Activated naive CD4-positive, alpha-beta T cell treated with anti-CD3 and anti-CD28 coated beads for 36 hours (primary cell): ENCODE measurements at regions of chr5 and their contacts with region 1.

Region 1: GRCh38 chr5:151447174-151448037 is at the start of gene SLC36A1:
- DNase-seq: peak; percentile 97
- H3K4me3 Mint-ChIP-seq: peak within 1 kb of the TSS; percentile 96
- H3K27ac Mint-ChIP-seq: peak within 1 kb of the TSS; percentile 76
- H3K4me1 Mint-ChIP-seq: peaks cover 15% of the 10 kb centered on the region
- H3K27me3 Mint-ChIP-seq: no peaks in the 10 kb centered on the region
- total RNA-seq, gene SLC36A1: 2.6 to 3.1 TPM

Region 2: DNA sequence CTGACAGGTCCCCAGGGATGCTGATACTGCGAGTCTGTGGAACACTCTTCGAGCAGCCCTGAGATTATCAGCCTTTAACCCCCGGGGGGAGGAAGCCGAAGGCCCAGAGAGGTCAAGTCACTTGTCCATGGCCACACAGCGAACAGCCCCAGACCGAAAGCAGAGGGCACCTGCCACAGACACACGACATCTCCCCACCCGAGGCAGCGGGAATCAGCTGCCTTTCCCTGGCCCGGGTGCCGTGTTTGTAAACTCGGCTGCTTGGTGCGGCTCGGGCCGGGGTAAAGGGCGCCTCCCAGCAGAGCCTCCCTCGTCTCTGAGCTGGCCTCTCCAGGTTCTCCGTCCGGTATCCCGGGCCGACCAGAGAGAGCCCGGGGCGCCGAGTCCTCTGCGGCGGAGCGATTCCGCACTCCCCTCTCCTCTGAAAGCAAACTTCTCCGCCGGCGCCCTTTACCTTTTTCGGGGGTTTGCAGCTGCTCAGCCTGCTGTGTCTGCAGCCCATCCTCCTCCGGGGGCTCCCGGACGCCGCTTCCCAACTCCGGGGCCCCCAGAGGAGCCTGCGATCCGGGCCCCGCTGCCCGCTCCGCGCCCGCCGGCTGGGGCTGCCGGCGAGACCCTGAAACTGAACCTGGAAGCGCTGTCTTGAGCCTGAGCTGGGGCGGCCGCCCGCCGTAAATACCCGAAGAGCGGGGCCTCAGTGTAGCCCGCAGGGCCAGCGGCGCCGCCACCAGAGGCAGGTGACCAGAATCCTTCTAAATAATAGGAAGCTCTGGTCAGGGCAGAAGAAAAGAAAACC is 223.7 kb before region 1 on chr5 and contains the start of gene CCDC69:
- CTCF ChIA-PET with region 1: no interaction called
- intact Hi-C with region 1: loop called (anchors 5 kb)
- DNase-seq: peak; percentile 59
- H3K4me3 Mint-ChIP-seq: peak within 1 kb of the TSS; percentile 85
- H3K27ac Mint-ChIP-seq: peak within 1 kb of the TSS; percentile 93
- H3K4me1 Mint-ChIP-seq: peaks cover 56% of the 10 kb centered on the region
- H3K27me3 Mint-ChIP-seq: no peaks in the 10 kb centered on the region
- total RNA-seq, gene CCDC69: 15.5 to 18.5 TPM

Region 3: GRCh38 chr5:151363673-151364072 is 83.7 kb before region 1 on chr5:
- CTCF ChIA-PET with region 1: no interaction called
- intact Hi-C with region 1: no loop called
- DNase-seq: no peak
- H3K4me3 Mint-ChIP-seq: no peak overlapping the region
- H3K27ac Mint-ChIP-seq: no peak overlapping the region
- H3K4me1 Mint-ChIP-seq: no peaks in the 10 kb centered on the region
- H3K27me3 Mint-ChIP-seq: peaks cover 11% of the 10 kb centered on the region

Region 4: DNA sequence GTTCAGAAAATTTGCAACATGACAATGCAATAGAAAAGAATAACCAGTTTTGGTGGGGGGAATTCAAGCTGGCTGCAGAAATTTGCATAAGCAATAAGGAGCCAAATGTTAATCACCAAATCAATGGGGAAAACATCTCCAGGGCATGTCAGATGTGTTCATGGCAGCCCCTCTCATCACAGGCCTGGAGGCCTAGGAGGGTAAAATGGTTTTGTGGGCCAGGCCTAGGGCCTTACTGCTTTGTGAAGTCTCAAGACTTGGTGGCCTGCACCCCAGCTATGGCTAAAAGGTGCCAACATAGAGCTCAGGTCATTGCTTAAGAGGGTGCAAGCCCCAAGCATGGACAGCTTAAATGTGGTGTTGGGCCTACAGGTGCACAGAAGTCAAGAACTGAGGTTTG is 29.7 kb before region 1 on chr5:
- CTCF ChIA-PET with region 1: no interaction called
- intact Hi-C with region 1: no loop called
- DNase-seq: no peak
- H3K4me3 Mint-ChIP-seq: no peak overlapping the region
- H3K27ac Mint-ChIP-seq: no peak overlapping the region
- H3K4me1 Mint-ChIP-seq: no peaks in the 10 kb centered on the region
- H3K27me3 Mint-ChIP-seq: peaks cover 10% of the 10 kb centered on the region

Region 5: GRCh38 chr5:151523335-151523734 is 75.9 kb after region 1 on chr5:
- CTCF ChIA-PET with region 1: interaction called, 20 read pairs
- intact Hi-C with region 1: loop called (anchors 1 kb)
- DNase-seq: peak; percentile 78
- H3K4me3 Mint-ChIP-seq: no peak overlapping the region
- H3K27ac Mint-ChIP-seq: no peak overlapping the region
- H3K4me1 Mint-ChIP-seq: peaks cover 5% of the 10 kb centered on the region
- H3K27me3 Mint-ChIP-seq: no peaks in the 10 kb centered on the region

Region 6: GRCh38 chr5:151651997-151652645 is 204.7 kb after region 1 on chr5:
- CTCF ChIA-PET with region 1: interaction called, 45 read pairs
- intact Hi-C with region 1: loop called (anchors 1 kb)
- DNase-seq: peak; percentile 88
- H3K4me3 Mint-ChIP-seq: no peak overlapping the region
- H3K27ac Mint-ChIP-seq: no peak overlapping the region
- H3K4me1 Mint-ChIP-seq: no peaks in the 10 kb centered on the region
- H3K27me3 Mint-ChIP-seq: no peaks in the 10 kb centered on the region

Region 7: GRCh38 chr5:151758430-151759241 is 311.2 kb after region 1 on chr5 and contains the start of gene ATOX1:
- CTCF ChIA-PET with region 1: interaction called, 4 read pairs
- intact Hi-C with region 1: loop called (anchors 5 kb)
- DNase-seq: peak; percentile 91
- H3K4me3 Mint-ChIP-seq: peak within 1 kb of the TSS; percentile 81
- H3K27ac Mint-ChIP-seq: peak within 1 kb of the TSS; percentile 78
- H3K4me1 Mint-ChIP-seq: peaks cover 30% of the 10 kb centered on the region
- H3K27me3 Mint-ChIP-seq: no peaks in the 10 kb centered on the region
- total RNA-seq, gene ATOX1: 87.7 to 92.6 TPM

Region 8: DNA sequence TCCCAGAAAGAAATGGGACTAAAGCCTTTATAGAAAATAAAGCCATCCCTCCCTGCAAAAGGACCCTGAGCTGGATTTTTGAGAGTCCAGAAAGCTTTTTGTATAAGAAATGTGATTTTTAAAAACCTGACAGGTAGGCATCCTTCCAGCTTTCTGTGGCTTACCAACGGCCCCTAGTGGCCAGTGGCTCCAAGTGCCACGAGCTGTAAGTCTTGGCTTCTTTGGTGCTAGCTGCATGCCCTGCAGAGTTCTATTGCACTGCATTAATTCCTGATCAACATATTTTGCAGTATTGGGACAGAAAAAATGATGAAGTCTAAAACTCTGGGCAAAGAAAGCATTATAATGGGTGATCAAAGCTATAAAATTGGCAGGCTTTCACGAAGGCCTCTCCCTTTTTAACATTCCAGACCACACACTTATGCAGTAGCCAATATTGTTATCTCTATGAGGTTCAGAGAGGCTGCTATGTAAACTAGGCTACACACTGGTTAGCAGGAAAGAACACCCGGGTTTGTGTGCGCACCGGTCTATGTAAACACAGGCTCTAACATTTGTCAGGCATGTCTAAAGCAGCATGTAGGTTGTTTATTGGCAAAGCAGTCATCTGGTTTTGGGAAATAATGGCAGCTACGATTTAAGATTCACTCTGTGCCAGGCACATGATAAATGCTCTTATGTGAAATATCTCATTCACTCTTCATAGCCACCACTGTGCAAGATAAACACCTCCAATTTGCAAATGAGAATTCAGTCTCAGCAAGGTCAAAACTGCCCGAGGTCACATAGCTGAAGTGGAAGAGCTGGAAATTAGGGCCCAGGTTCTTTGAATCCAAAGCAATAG is 902.5 kb after region 1 on chr5:
- CTCF ChIA-PET with region 1: no interaction called
- intact Hi-C with region 1: no loop called
- DNase-seq: peak; percentile 56
- H3K4me3 Mint-ChIP-seq: no peak overlapping the region
- H3K27ac Mint-ChIP-seq: no peak overlapping the region
- H3K4me1 Mint-ChIP-seq: no peaks in the 10 kb centered on the region
- H3K27me3 Mint-ChIP-seq: peaks cover 8% of the 10 kb centered on the region